ENCODE measurements at regions of chr3 and their contacts with region 1.

Region 1: GRCh38 chr3:160707187-160707794 is 30.3 kb downstream of the ARL14 start:
- ATAC-seq: peak; percentile 52 to 91 (median 72)
- H3K4me3 ChIP-seq: no peak overlapping the region
- H3K27ac ChIP-seq: no peak overlapping the region
- H3K4me1 ChIP-seq: no peaks in the 10 kb centered on the region

Region 2: DNA sequence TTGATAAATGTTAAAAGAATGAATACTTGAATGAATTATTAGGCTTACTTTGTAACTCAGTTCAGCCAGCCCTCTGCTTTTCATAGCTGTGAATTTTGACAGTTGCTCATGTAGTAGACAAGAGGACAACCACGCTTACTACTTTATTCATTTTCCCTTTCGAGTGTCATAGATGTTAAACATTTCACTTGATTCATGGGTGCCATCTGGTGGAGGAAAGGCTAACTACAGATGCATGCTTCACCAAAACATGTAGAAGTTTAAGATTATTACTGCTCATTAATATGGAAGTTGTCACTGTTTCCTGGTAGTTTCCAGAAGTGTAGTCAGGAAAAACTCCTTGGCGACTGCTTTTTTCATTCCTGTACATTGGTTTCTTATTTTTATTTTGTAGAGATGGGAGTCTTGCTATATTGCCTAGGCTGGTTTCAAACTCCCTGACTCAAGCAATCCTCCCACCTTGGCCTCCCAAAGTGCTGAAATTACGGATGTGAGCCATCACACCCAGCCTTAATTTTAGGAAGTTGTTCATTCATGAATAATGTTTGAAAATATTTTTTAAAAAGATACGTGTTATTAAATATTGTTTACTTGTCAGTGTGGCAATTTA is 234.7 kb after region 1 on chr3:
- in situ Hi-C with region 1: loop called in 6 of 9 experiments (anchors 25 kb)
- ATAC-seq: peak in 6 of 8 experiments; percentile 35 to 84 (median 67)
- H3K4me3 ChIP-seq: no peak overlapping the region
- H3K27ac ChIP-seq: no peak overlapping the region
- H3K4me1 ChIP-seq: peaks cover 0 to 3% of the 10 kb centered on the region in 2 donors

Region 3: GRCh38 chr3:161449787-161450186 is 742.5 kb after region 1 on chr3:
- in situ Hi-C with region 1: loop called in 1 of 9 experiments (anchors 25 kb)
- ATAC-seq: no peak
- H3K4me3 ChIP-seq: no peak overlapping the region
- H3K27ac ChIP-seq: no peak overlapping the region
- H3K4me1 ChIP-seq: peaks cover 0 to 3% of the 10 kb centered on the region in 2 donors